A673 (cell line): ENCODE measurements at regions of chr12 and their contacts with region 1.

Region 1: DNA sequence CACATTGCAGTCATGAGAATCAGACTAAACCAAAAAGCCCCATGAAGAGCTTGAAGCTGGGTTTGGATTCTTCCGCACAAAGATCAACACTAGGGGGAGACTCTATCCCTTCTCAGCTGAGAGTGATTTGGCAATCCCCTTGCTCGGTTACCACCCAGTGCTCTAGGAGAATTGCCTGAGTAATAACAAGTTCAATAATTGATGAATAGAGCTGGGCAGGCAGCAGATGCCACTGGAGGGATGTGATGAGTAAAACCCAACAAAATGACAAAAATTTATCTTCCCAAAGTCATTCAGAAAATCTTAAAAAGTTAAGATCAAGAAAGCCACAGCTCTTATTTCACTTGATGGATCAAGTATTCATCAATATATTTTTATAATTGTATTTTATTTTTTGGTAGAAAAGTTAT is 185.6 kb upstream of the ARID2 start:
- DNase-seq: peak; percentile 90
- H3K4me3 ChIP-seq: no peak overlapping the region
- H3K27ac ChIP-seq: no peak overlapping the region
- H3K4me1 ChIP-seq: peaks cover 33% of the 10 kb centered on the region
- H3K27me3 ChIP-seq: no peaks in the 10 kb centered on the region
- CTCF ChIP-seq: peak; percentile 90

Region 2: DNA sequence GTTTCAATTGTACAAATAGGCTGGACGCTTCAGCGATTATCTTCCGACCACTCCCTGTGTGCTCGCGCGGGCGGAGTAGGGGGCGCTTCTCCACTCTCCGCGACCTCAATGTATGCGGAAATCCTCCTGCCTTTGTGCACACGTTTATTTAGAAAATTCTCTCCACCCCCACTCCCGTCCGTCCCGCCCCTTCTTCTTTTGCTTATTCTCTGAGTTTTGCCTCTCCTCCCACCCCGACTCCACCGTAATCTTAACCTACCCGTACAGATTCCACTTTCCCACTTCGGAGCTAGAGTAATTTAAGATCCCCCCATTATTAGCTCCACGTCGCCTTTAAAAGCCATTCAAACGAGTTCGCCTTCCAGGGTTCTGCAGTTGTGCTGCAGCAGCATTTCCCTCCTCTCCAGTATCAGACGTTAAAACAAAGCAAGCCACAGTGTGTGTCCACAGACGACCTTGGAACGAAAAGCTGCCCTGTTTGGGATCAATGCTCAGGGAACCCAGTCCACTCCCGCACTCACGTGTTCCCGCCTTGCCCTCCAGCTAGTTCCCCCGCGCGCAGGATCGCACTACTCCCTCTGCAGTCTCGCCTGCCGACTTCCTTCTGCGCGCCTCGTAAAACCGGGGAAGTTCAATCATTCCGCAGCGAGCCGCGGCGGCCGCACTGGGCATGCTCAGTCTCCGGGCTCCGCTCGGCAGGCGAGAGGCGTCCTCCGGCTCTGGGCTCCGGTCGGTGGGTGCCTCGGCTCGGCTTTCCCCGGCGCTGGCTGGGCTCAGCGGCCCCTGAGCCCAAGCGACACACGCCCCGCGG is 328.3 kb before region 1 on chr12 and contains the start of gene ANO6:
- CTCF ChIA-PET with region 1: no interaction called
- POLR2A ChIA-PET with region 1: no interaction called
- intact Hi-C with region 1: no loop called
- DNase-seq: peak; percentile 97
- H3K4me3 ChIP-seq: peak within 1 kb of the TSS; percentile 68
- H3K27ac ChIP-seq: peak within 1 kb of the TSS; percentile 93
- H3K4me1 ChIP-seq: peaks cover 35% of the 10 kb centered on the region
- H3K27me3 ChIP-seq: no peaks in the 10 kb centered on the region
- CTCF ChIP-seq: peak; percentile 48; the same call in 1 of the 2 replicates
- total RNA-seq, gene ANO6: 59.3 TPM in 2 replicates

Region 3: GRCh38 chr12:45728630-45729232 is 184.8 kb after region 1 on chr12:
- CTCF ChIA-PET with region 1: interaction called, 11 read pairs
- POLR2A ChIA-PET with region 1: no interaction called
- intact Hi-C with region 1: loop called (anchors 2 kb)
- DNase-seq: peak; percentile 99
- H3K4me3 ChIP-seq: peak overlapping the region; percentile 94
- H3K27ac ChIP-seq: peak overlapping the region; percentile 99
- H3K4me1 ChIP-seq: peaks cover 30% of the 10 kb centered on the region
- H3K27me3 ChIP-seq: no peaks in the 10 kb centered on the region
- CTCF ChIP-seq: peak; percentile 86

Region 4: GRCh38 chr12:45745861-45746277 is 202.0 kb after region 1 on chr12:
- CTCF ChIA-PET with region 1: interaction called, 4 read pairs
- POLR2A ChIA-PET with region 1: interaction called, 4 read pairs
- intact Hi-C with region 1: loop called (anchors 5 kb)
- DNase-seq: peak; percentile 40
- H3K4me3 ChIP-seq: no peak overlapping the region
- H3K27ac ChIP-seq: no peak overlapping the region
- H3K4me1 ChIP-seq: peaks cover 8% of the 10 kb centered on the region
- H3K27me3 ChIP-seq: no peaks in the 10 kb centered on the region
- CTCF ChIP-seq: peak; percentile 55